GM12878 (cell line): ENCODE measurements at regions of chr5 and their contacts with region 1.

Region 1: DNA sequence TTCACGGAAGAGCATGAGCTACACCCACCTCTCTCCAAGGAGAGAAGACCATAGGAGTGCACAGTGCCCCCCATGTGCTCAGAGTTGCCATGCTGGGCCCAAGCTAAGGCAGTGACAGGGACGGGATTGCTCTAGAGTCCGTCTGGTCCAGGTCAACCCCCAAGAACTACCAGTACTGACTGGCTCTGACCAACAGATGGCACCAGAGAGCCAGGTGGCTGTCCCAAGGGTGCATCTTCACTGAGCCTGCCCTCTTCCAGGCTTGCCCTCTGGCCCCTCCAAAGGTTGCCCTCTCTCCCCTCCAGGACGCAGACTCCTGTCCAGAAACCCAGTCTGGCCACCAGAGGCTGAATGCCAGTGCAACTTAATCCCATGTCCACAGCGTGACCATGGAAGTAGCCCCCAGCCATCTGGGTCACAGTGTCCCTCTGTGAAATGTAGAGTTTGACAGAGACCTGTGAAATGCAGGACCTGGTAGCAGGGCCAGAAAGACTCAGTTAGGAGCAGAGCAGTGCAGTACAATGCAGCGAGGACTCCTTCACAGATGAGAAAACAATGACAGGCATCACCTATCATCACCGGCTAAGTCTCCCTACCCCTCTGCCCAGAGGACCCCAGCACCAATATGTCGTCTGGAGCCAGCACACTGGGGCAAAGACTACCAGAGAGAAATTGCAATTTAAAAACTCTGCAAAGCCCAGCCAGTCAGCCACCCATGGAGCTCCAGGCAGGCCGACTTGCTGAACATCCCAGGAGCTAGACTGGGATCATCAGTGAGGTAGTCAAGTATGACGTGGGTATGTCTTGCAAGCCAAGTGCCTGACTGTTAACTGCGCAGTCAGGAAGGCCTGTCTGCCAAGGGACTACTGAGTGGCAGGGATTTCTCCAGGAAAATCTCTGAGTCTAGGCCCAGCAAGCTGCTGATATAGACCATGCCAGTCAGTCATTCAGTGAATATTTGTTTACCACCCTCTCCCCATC is 7.7 kb upstream of the SKP1 start:
- DNase-seq: peak; percentile 16
- ATAC-seq: peak; percentile 99
- H3K4me3 ChIP-seq: no peak overlapping the region
- H3K27ac ChIP-seq: no peak overlapping the region
- H3K4me1 ChIP-seq: no peaks in the 10 kb centered on the region
- H3K27me3 ChIP-seq: no peaks in the 10 kb centered on the region
- CTCF ChIP-seq: peak; percentile 87 to 97 (median 89)
- EP300 ChIP-seq: no peak
- POLR2A ChIP-seq: no peak
- RAD21 ChIP-seq: peak; percentile 92

Region 2: DNA sequence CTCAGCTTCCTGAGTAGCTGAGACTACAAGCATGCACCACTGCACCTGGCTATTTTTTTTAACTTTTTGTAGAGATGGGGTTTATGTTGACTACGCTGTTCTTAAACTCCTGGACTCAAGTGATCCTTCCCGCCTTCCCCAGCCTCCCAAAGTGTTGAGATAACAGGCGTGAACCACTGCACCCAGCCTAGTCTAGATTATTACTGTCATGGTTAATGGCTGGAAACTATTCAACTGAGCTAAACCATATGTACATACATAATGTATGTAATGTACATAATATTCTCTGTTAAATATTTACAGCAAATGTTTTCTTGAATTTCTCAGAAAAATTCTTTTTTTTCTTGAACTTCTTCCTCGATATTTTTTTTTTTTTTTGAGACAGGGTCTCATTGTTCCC is 20.1 kb after region 1 on chr5:
- CTCF ChIA-PET with region 1: interaction called, 13 read pairs
- POLR2A ChIA-PET with region 1: no interaction called
- RAD21 ChIA-PET with region 1: interaction called, 5 read pairs
- SMC1A ChIA-PET with region 1: interaction called, 3 read pairs
- in situ Hi-C with region 1: no loop called
- intact Hi-C with region 1: no loop called
- DNase-seq: no peak
- ATAC-seq: no peak
- H3K4me3 ChIP-seq: no peak overlapping the region
- H3K27ac ChIP-seq: no peak overlapping the region
- H3K4me1 ChIP-seq: no peaks in the 10 kb centered on the region
- H3K27me3 ChIP-seq: no peaks in the 10 kb centered on the region
- CTCF ChIP-seq: no peak
- EP300 ChIP-seq: no peak
- POLR2A ChIP-seq: no peak
- RAD21 ChIP-seq: no peak

Region 3: GRCh38 chr5:134289509-134290113 is 105.2 kb after region 1 on chr5:
- CTCF ChIA-PET with region 1: interaction called, 99 read pairs
- POLR2A ChIA-PET with region 1: interaction called, 3 read pairs
- RAD21 ChIA-PET with region 1: interaction called, 26 read pairs
- SMC1A ChIA-PET with region 1: interaction called, 91 read pairs
- in situ Hi-C with region 1: loop called (anchors 5 kb)
- intact Hi-C with region 1: loop called (anchors 1 kb)
- DNase-seq: peak; percentile 24
- ATAC-seq: peak; percentile 96
- H3K4me3 ChIP-seq: no peak overlapping the region
- H3K27ac ChIP-seq: no peak overlapping the region
- H3K4me1 ChIP-seq: no peaks in the 10 kb centered on the region
- H3K27me3 ChIP-seq: no peaks in the 10 kb centered on the region
- CTCF ChIP-seq: peak; percentile 61 to 84 (median 63)
- EP300 ChIP-seq: no peak
- POLR2A ChIP-seq: no peak
- RAD21 ChIP-seq: peak; percentile 94

Region 4: DNA sequence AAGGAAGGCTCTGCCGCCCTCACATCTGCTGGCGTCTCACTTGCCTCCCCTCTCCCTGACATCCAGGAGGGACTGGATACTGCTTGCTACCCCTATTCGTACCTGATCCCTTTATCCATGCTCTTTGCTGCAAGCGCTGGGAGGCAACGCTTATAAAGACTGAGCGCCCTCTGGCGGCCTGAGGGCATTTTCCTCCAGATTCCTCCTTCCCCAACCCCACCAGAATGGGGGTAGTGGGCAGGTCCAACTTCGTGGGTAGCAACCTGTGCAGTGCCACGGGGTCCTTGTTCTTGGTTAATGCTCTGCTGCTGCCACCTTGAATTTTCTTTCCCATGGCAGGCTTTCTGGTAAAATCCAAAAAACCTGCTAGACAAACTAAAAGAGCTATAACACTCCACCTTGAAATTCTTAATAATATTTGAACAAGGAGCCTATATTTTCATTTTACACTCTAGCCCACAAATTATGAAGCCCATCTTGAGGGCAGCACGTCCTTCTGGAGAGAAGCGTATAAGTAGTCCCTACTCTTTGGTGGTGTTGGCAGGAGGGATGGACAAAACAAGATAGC is 393.4 kb after region 1 on chr5:
- CTCF ChIA-PET with region 1: no interaction called
- POLR2A ChIA-PET with region 1: no interaction called
- RAD21 ChIA-PET with region 1: interaction called, 3 read pairs
- SMC1A ChIA-PET with region 1: no interaction called
- in situ Hi-C with region 1: loop called (anchors 5 kb)
- intact Hi-C with region 1: no loop called
- DNase-seq: no peak
- ATAC-seq: peak; percentile 92
- H3K4me3 ChIP-seq: no peak overlapping the region
- H3K27ac ChIP-seq: no peak overlapping the region
- H3K4me1 ChIP-seq: no peaks in the 10 kb centered on the region
- H3K27me3 ChIP-seq: no peaks in the 10 kb centered on the region
- CTCF ChIP-seq: peak; percentile 79 to 91 (median 87)
- EP300 ChIP-seq: no peak
- POLR2A ChIP-seq: no peak
- RAD21 ChIP-seq: peak; percentile 92